H1 (cell line): ENCODE measurements at regions of chr4 and their contacts with region 1.

Region 1: DNA sequence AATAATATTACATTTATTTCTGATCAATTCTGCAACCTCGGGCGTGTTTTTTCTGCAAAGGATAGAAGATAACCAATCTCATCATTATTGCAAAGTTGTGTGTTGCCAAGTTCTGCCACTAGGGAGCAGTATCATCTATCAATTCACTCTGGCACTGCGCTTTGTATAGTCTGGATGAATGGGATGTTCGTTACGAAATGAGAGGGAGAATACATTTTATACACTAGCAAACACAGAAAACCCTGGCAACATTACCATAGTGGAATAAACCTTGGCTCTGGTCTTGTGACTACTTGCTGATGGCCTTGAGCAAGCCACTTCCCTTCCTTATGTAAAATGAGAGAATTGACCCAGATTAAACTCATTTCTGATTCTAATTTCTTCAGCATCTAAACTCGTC is 97.5 kb upstream of the ZNF518B start:
- DNase-seq: peak in 1 of 2 experiments; percentile 77
- H3K4me3 ChIP-seq: no peak overlapping the region
- H3K27ac ChIP-seq: no peak overlapping the region
- H3K4me1 ChIP-seq: no peaks in the 10 kb centered on the region
- H3K27me3 ChIP-seq: no peaks in the 10 kb centered on the region
- CTCF ChIP-seq: peak in 2 of 3 experiments; percentile 59 to 75; a peak in 3 of 4 replicates
- EP300 ChIP-seq: no peak
- POLR2A ChIP-seq: no peak
- RAD21 ChIP-seq: peak; percentile 85 to 86

Region 2: DNA sequence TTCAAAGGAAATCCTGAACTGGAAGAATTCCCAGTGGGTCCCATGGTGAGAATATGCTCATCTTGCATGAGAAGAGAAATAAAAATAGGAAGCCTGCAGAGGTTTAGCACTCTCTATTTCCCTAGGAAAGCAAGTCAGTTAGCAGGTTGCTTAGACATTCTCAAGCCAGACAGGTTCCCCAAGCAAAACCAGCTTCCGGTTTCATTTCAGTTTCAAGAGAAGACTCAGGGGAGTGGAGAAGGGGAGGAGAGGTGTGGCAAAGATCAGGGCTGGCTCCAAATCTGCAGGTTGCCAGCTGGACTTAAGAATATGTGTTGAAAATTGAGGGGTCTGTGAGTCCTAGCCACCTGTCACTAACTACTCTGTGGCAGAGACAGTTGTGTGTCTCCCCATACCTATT is 22.3 kb after region 1 on chr4:
- CTCF ChIA-PET with region 1: interaction called, 57 read pairs
- POLR2A ChIA-PET with region 1: no interaction called
- DNase-seq: no peak
- H3K4me3 ChIP-seq: no peak overlapping the region
- H3K27ac ChIP-seq: no peak overlapping the region
- H3K4me1 ChIP-seq: peaks cover 2 to 8% (median 5%) of the 10 kb centered on the region in 4 experiments; a peak in 3 of 7 replicates
- H3K27me3 ChIP-seq: no peaks in the 10 kb centered on the region
- CTCF ChIP-seq: no peak
- EP300 ChIP-seq: no peak
- POLR2A ChIP-seq: no peak
- RAD21 ChIP-seq: no peak